ENCODE measurements at regions of chr2 and their contacts with region 1.

Region 1: DNA sequence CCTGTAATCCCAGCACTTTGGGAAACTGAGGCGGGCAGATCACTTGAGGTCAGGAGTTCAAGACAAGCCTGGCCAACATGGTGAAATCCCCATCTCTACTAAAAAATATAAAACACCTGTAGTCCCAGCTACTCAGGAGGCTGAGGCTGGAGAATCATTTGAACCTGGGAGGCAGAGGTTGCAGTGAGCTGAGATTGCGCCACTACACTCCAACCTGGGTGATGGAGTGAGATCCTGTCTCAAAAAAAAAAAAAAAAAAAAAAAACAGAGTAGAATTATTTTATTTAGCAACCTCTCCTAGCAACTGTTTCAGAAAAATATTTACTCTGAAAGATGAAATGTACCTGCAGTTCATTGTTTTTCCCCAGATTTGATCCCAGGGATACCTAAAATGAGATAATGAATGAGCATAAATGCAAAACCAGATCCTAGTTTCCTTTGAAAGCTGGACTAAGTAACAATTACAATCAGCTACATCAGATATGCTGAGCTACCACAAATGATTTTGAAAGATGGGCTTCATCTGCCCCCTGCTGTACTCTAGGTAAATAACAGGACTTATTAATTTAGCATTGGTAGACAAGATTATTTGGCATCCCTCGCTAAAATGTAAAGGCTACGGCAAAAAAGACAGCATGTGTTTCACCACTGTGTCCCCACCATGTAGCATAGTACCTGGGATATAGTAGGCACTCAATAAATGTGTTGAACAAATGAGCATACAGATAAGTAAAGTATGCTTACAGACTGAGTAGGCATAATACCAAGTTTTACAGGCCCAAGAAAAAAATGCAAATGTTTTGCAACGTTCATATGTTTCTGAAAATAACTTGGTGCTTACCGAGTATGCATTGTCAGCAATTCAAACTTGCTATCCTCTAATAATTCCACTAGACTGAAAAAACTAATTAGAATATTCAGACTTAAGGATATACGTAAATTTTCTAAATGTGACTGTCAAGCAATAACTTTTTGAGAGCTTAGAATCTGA is 102.5 kb downstream of the ATL2 start:
- DNase-seq: peak in 1 of 2 experiments; percentile 69
- H3K4me3 ChIP-seq: no peak overlapping the region
- H3K4me3 Mint-ChIP-seq: no peak overlapping the region
- H3K27ac Mint-ChIP-seq: peak overlapping the region; percentile 70
- H3K4me1 ChIP-seq: peaks cover 44% of the 10 kb centered on the region
- H3K4me1 Mint-ChIP-seq: peaks cover 51% of the 10 kb centered on the region
- H3K27me3 ChIP-seq: no peaks in the 10 kb centered on the region
- H3K27me3 Mint-ChIP-seq: no peaks in the 10 kb centered on the region
- CTCF ChIP-seq: peak; percentile 62 to 69

Region 2: GRCh38 chr2:37389989-37390765 is 884.4 kb before region 1 on chr2:
- CTCF ChIA-PET with region 1: no interaction called
- POLR2A ChIA-PET with region 1: no interaction called
- intact Hi-C with region 1: loop called (anchors 10 kb)
- DNase-seq: peak; percentile 40 to 46
- H3K4me3 ChIP-seq: no peak overlapping the region
- H3K4me3 Mint-ChIP-seq: no peak overlapping the region
- H3K27ac Mint-ChIP-seq: no peak overlapping the region
- H3K4me1 ChIP-seq: peaks cover 12% of the 10 kb centered on the region
- H3K4me1 Mint-ChIP-seq: peaks cover 26% of the 10 kb centered on the region
- H3K27me3 ChIP-seq: no peaks in the 10 kb centered on the region
- H3K27me3 Mint-ChIP-seq: no peaks in the 10 kb centered on the region
- CTCF ChIP-seq: no peak

Region 3: GRCh38 chr2:37672104-37672869 is 602.3 kb before region 1 on chr2:
- CTCF ChIA-PET with region 1: no interaction called
- POLR2A ChIA-PET with region 1: no interaction called
- intact Hi-C with region 1: no loop called
- DNase-seq: peak; percentile 94 to 95
- H3K4me3 ChIP-seq: peak overlapping the region; percentile 98
- H3K4me3 Mint-ChIP-seq: peak overlapping the region; percentile 73
- H3K27ac Mint-ChIP-seq: peak overlapping the region; percentile 20
- H3K4me1 ChIP-seq: peaks cover 47% of the 10 kb centered on the region
- H3K4me1 Mint-ChIP-seq: peaks cover 40% of the 10 kb centered on the region
- H3K27me3 ChIP-seq: no peaks in the 10 kb centered on the region
- H3K27me3 Mint-ChIP-seq: no peaks in the 10 kb centered on the region
- CTCF ChIP-seq: no peak

Region 4: GRCh38 chr2:37890893-37891495 is 383.6 kb before region 1 on chr2:
- CTCF ChIA-PET with region 1: interaction called, 3 read pairs
- POLR2A ChIA-PET with region 1: no interaction called
- intact Hi-C with region 1: loop called (anchors 1 kb)
- DNase-seq: peak; percentile 80 to 84
- H3K4me3 ChIP-seq: no peak overlapping the region
- H3K4me3 Mint-ChIP-seq: no peak overlapping the region
- H3K27ac Mint-ChIP-seq: no peak overlapping the region
- H3K4me1 ChIP-seq: no peaks in the 10 kb centered on the region
- H3K4me1 Mint-ChIP-seq: peaks cover 6% of the 10 kb centered on the region
- H3K27me3 ChIP-seq: no peaks in the 10 kb centered on the region
- H3K27me3 Mint-ChIP-seq: no peaks in the 10 kb centered on the region
- CTCF ChIP-seq: peak; percentile 80 to 81

Region 5: GRCh38 chr2:37982147-37982582 is 292.4 kb before region 1 on chr2:
- CTCF ChIA-PET with region 1: interaction called, 9 read pairs
- POLR2A ChIA-PET with region 1: no interaction called
- intact Hi-C with region 1: loop called (anchors 1 kb)
- DNase-seq: peak; percentile 69 to 81
- H3K4me3 ChIP-seq: peak overlapping the region; percentile 16; the same call in 1 of the 2 replicates
- H3K4me3 Mint-ChIP-seq: peak overlapping the region; percentile 2
- H3K27ac Mint-ChIP-seq: no peak overlapping the region
- H3K4me1 ChIP-seq: no peaks in the 10 kb centered on the region
- H3K4me1 Mint-ChIP-seq: peaks cover 12% of the 10 kb centered on the region
- H3K27me3 ChIP-seq: no peaks in the 10 kb centered on the region; the same call in 1 of the 2 replicates
- H3K27me3 Mint-ChIP-seq: no peaks in the 10 kb centered on the region
- CTCF ChIP-seq: peak; percentile 91 to 92

Region 6: DNA sequence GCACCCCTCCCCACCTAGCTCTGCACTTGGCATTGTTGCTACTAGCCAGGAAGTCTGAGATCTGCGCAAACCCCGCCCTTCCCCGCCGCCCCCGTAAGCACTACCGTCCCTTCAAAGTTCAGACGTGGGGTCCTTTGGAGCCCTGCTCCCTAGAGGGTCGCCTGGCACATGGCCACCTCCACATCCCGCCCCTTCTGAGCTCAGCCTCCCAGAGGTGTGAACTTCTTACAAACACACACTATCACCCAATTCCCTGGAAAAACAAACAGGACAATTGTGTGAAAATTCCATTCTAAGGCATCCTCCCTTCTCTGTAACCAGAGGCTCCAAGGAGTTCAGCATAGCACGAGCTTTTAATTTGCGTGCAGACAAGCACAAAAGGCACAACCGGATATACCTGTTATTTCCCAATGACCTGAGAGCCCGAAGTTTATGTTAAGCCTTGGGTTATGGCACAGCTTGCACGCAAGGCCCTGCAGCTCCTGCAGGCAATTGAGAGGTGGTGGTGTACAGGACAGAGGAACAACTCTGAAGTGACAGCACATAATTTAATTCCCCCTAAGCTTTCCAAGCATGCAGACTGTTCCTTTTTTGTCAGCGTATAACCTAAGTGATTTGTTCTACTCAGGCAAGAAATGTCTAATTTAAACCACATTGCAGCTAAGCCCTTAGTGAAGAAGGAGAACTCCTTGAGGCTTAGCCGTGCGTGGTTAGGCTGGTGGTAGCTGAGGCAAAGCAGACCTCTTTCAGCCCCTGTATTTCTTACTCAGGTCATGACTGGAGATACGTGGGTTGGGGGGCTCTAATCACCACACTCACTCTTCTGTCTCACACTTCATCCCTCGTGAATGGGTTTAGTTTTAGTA is 178.4 kb before region 1 on chr2:
- CTCF ChIA-PET with region 1: interaction called, 4 read pairs
- POLR2A ChIA-PET with region 1: no interaction called
- intact Hi-C with region 1: loop called (anchors 1 kb)
- DNase-seq: peak; percentile 90 to 92
- H3K4me3 ChIP-seq: no peak overlapping the region
- H3K4me3 Mint-ChIP-seq: peak overlapping the region; percentile 60
- H3K27ac Mint-ChIP-seq: peak overlapping the region; percentile 92
- H3K4me1 ChIP-seq: peaks cover 46% of the 10 kb centered on the region
- H3K4me1 Mint-ChIP-seq: peaks cover 46% of the 10 kb centered on the region
- H3K27me3 ChIP-seq: no peaks in the 10 kb centered on the region
- H3K27me3 Mint-ChIP-seq: no peaks in the 10 kb centered on the region
- CTCF ChIP-seq: no peak

Region 7: GRCh38 chr2:38163006-38163405 is 111.6 kb before region 1 on chr2:
- CTCF ChIA-PET with region 1: interaction called, 8 read pairs
- POLR2A ChIA-PET with region 1: no interaction called
- intact Hi-C with region 1: loop called (anchors 1 kb)
- DNase-seq: peak in 1 of 2 experiments; percentile 13
- H3K4me3 ChIP-seq: no peak overlapping the region
- H3K4me3 Mint-ChIP-seq: no peak overlapping the region
- H3K27ac Mint-ChIP-seq: no peak overlapping the region
- H3K4me1 ChIP-seq: no peaks in the 10 kb centered on the region
- H3K4me1 Mint-ChIP-seq: peaks cover 7% of the 10 kb centered on the region
- H3K27me3 ChIP-seq: no peaks in the 10 kb centered on the region
- H3K27me3 Mint-ChIP-seq: no peaks in the 10 kb centered on the region
- CTCF ChIP-seq: no peak

Region 8: GRCh38 chr2:38284971-38285370 is 10.4 kb after region 1 on chr2:
- CTCF ChIA-PET with region 1: interaction called, 5 read pairs
- POLR2A ChIA-PET with region 1: interaction called, 5 read pairs
- intact Hi-C with region 1: loop called (anchors 1 kb)
- DNase-seq: peak; percentile 87 to 91
- H3K4me3 ChIP-seq: no peak overlapping the region
- H3K4me3 Mint-ChIP-seq: peak overlapping the region; percentile 36
- H3K27ac Mint-ChIP-seq: peak overlapping the region; percentile 92
- H3K4me1 ChIP-seq: peaks cover 67% of the 10 kb centered on the region
- H3K4me1 Mint-ChIP-seq: peaks cover 57% of the 10 kb centered on the region
- H3K27me3 ChIP-seq: no peaks in the 10 kb centered on the region
- H3K27me3 Mint-ChIP-seq: no peaks in the 10 kb centered on the region
- CTCF ChIP-seq: no peak

Measured in Caco-2 (cell line).